Right lobe of liver (tissue), 6 donors: ENCODE measurements at regions of chr22 and their contacts with region 1.

Region 1: DNA sequence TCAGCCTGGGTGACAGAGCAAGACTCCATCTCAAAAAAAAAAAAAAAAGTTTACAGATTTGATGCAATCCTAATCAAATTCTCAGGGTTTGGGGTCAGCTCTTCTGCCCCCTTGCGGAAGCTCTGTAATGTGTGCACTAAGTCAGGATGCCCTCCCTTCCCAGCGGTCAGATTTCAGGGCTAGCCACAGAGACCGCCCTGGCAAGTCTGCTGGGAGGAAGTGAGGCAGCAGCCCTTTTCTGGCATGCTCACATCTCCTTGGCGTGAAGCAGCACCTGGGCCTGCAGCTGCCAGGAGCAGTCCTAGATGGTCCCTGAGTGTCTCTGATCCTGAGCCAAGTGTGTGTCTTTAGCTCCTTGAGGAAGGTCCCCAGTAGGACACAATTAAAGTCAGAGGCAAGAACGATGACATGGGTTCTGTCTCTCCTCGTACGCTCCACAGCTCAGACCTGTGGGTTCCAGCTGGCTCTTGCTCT is 10.9 kb upstream of the APOBEC3C start:
- DNase-seq: peak; percentile 63 to 70 (median 64)
- ATAC-seq: peak; percentile 94 to 98 (median 96)
- H3K4me3 ChIP-seq: no peak overlapping the region
- H3K27ac ChIP-seq: no peak overlapping the region
- H3K4me1 ChIP-seq: no peaks in the 10 kb centered on the region
- H3K27me3 ChIP-seq: no peaks in the 10 kb centered on the region
- CTCF ChIP-seq: peak; percentile 58 to 72 (median 64)
- POLR2A ChIP-seq: no peak

Region 2: DNA sequence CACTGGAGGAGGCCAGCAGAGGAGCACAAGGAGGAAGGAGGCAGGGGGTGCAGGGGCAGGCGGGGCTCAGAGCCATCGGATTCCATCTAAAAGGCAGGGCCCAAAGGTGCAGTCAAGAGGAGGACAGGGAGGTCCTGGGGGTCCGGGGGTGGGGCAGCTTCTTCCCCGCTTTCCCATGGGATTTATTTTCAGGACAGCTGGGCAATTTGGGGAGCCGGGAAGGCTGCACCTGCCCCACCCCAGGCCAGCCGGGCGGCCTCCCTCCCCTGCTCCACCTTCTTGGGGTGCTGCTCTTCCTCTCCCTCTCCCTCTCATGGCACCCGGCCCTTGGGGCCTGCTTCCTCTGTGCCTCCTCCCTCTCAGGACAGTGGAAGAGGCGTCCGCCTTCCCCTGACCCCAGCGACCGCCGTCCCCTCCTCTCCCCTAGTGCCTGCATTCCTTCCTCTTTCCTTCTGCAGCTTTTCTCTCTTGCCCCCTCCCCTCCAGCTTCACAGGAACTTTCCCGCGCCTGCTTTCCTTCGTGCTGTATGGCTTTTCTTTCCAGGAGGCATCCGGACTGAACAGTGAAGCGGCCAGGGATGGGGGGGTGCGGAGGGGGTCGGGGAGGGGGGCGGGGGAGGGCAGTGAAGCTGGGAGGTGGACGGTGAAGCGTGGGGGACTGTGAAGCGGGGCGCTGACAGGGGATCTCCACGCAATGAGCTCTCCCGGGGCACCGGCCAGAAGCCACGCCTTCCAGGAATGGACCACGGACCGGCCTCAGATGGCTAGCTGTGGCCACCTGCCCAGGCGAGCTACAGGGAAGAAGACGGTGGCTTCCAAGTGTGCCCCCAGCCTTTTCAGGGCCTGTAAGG is 120.8 kb after region 1 on chr22:
- intact Hi-C with region 1: loop called in 1 of 2 experiments (anchors 5 kb)
- DNase-seq: peak in 1 of 3 donors; percentile 51
- ATAC-seq: peak; percentile 26 to 45 (median 37)
- H3K4me3 ChIP-seq: no peak overlapping the region
- H3K27ac ChIP-seq: no peak overlapping the region
- H3K4me1 ChIP-seq: no peaks in the 10 kb centered on the region
- H3K27me3 ChIP-seq: no peaks in the 10 kb centered on the region
- CTCF ChIP-seq: no peak
- POLR2A ChIP-seq: no peak